Activated CD4-positive, alpha-beta T cell treated with anti-CD3 and anti-CD28 coated beads, Interleukin-2, amount 10 ng/mL, durations not matched to agents 7 days and 5 days (primary cell): ENCODE measurements at regions of chr17 and their contacts with region 1.

Region 1: DNA sequence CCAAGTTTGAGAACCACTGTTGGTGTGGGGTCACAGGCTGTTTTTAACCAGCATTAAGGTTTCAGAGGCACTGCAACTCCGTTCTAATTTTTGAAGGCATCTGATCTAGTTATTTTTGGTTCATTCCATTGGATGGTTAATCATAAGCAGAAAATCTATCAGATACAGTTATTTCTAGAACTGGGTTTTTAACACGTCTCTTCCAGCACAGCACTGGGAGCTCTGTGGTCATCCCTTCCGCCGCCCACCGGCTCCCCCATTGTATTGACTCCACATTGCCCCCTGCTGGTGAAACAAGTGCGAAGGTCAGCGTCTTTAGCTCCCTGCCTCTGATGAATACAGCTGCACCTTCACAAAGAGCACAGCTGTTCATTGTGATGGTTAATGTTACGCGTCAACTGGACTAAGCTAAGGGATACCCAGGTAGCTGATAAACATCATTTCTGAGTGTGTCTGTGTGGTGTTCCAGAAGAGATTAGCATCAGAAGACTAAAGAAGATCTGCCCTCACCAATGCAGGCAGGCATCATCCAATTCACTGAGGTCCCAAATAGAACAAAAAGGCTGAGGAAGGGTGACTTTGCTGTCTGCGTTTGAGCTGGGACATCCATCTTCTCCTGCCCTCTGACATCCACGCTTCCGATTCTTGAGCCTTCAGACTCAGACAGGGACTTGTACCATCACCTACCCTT is 8.5 kb downstream of the CCL18 start:
- DNase-seq: peak; percentile 68
- H3K4me3 Mint-ChIP-seq: no peak overlapping the region
- H3K27ac Mint-ChIP-seq: no peak overlapping the region
- H3K4me1 Mint-ChIP-seq: peaks cover 5% of the 10 kb centered on the region
- H3K27me3 Mint-ChIP-seq: peaks cover 33% of the 10 kb centered on the region

Region 2: DNA sequence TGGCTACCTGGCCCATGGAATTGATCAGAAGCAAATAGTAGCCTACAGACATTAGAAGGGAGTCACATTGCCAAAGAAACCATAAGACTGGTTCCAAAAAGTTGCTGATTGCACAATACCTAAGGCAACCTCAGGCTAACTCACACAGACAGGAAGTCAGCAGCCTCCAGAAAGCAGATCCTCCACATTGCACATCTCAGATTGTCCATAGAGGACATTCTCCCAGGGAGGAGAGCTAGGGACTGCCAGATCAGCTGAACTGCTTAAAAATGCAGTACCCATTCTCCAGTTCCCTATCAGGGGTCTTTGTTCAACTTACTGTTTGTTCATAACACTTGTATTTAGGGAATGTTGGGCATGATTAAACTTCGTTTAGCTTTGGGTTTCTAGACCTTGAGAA is 13.2 kb after region 1 on chr17:
- CTCF ChIA-PET with region 1: interaction called, 24 read pairs
- POLR2A ChIA-PET with region 1: no interaction called
- DNase-seq: no peak
- H3K4me3 Mint-ChIP-seq: no peak overlapping the region
- H3K27ac Mint-ChIP-seq: no peak overlapping the region
- H3K4me1 Mint-ChIP-seq: peaks cover 46% of the 10 kb centered on the region
- H3K27me3 Mint-ChIP-seq: peaks cover 6% of the 10 kb centered on the region